ENCODE measurements at regions of chr11 and their contacts with region 1.

Region 1: DNA sequence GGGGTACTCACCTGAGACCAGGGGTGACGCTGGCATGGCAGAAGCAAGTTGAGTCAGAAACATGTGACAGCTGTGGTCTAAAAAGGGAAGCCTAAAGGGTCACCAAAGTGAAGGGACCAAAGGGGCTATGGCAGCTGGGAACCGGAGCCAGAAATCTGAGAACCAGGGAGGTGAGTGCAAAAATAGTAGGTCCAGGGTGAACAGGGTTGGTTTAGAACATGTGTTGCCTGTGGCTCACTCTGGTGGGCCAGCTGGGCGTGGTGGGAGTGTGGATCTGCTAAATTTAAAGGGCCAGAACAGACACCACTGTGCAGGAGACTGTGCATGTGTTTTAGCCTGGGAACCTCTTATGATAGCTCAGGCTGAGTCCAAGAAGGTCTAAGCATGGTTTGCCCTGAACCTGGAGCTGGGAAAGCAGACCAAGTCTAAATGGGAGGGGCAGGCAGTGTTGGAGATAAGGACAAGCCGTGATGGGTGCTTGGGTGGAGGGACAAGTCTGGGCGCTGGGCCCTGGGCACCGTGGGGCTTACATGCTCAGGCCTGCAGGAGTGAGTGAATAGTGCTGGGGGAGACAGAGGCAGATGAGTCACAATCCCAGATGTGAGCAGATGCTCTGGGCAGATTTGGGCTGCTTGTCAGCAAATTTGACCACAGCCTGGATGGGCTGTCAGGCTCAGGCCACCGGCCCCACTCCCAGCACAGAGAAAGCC is 41.4 kb upstream of the ZBED5 start:
- DNase-seq: no peak
- ATAC-seq: peak; percentile 73
- H3K4me3 ChIP-seq: peak overlapping the region; percentile 7 to 40; a peak in 3 of 4 replicates
- H3K27ac ChIP-seq: peak overlapping the region; percentile 93
- H3K4me1 ChIP-seq: peaks cover 34 to 45% of the 10 kb centered on the region in 2 experiments
- H3K27me3 ChIP-seq: no peaks in the 10 kb centered on the region
- CTCF ChIP-seq: no peak
- POLR2A ChIP-seq: peak; percentile 21
- RAD21 ChIP-seq: no peak

Region 2: DNA sequence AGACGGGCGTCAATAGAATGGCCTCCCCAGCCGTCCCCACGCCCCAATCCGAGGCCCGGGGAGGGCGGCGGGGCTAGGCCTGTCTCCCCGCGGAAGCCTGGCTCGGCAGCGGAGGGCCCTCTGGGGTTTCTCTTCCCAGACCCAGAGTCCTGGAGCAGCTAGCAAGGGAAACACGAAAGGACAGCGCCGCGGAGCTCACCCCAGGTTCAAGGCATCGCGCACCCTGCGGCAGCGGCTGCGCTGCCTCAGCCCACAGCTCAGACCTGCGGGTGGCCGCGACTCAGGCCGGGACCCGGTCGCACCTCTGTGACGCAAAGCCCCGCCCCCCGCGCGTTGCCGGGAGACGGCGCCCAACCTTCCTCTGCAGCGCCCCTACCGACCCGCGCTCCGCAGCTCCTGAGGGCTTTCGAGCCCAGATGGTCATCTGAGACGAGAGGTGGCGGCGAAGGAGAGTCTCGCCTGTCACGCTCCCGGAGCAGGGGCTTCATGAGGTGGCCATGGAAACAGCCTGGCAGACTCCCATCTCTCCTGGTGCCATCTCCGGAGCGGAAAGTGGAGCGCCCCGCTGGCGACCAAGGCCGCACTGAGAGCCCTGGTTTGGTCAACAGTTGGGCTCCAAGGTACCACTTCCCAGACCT is 358.2 kb before region 1 on chr11 and contains the start of gene RNF141:
- CTCF ChIA-PET with region 1: no interaction called
- POLR2A ChIA-PET with region 1: no interaction called
- RAD21 ChIA-PET with region 1: no interaction called
- intact Hi-C with region 1: no loop called
- DNase-seq: peak; percentile 84
- ATAC-seq: peak; percentile 89
- H3K4me3 ChIP-seq: peak within 1 kb of the TSS; percentile 76 to 83
- H3K27ac ChIP-seq: peak within 1 kb of the TSS; percentile 94
- H3K4me1 ChIP-seq: peaks cover 40 to 54% of the 10 kb centered on the region in 2 experiments
- H3K27me3 ChIP-seq: no peaks in the 10 kb centered on the region
- CTCF ChIP-seq: peak; percentile 57 to 83 (median 67); a peak in 5 of 6 replicates
- POLR2A ChIP-seq: peak; percentile 91
- RAD21 ChIP-seq: peak; percentile 53
- total RNA-seq, gene RNF141: 133 TPM

Region 3: DNA sequence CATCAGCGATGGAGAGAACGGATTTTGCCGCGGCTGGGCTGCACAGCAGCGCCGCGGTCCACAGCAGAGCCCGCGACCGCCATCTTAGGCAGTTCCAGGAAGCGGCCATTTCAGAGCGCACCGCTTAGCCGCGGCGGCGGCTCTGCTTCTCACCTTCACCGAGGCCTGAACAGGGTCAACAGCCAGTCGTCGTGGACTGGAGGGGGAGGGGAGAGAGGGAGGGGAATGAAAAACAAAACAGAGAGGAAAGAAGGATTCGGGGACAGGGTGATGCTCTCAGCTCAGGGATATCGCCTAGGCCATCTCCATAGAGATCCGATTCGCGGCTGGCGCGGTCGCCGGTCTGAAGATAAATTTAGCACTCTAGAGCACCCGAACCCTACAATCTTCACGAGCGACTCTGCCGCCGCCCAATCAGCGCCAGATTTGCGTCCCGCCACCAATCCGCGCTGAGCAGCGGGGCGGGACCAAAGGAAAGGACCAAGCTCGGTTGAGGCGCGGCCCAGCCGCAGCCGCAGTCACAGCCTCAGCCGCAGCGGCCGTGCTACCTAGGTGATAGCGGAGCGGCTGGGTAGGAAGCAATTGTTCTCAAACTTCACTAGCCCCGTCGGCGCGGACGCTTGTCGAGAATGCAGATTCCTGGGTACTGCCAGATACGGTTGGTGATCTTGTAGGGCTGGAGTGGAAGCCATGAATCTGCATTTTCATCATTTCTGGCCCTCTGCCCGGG is 41.4 kb before region 1 on chr11 and contains the start of gene ZBED5:
- CTCF ChIA-PET with region 1: no interaction called
- POLR2A ChIA-PET with region 1: interaction called, 9 read pairs
- RAD21 ChIA-PET with region 1: interaction called in 1 of 2 experiments, 6 read pairs
- intact Hi-C with region 1: loop called (anchors 1 kb)
- DNase-seq: peak; percentile 94
- ATAC-seq: peak; percentile 92
- H3K4me3 ChIP-seq: peak within 1 kb of the TSS; percentile 86 to 91
- H3K27ac ChIP-seq: peak within 1 kb of the TSS; percentile 91
- H3K4me1 ChIP-seq: peaks cover 0 to 21% of the 10 kb centered on the region in 2 experiments; a peak in 2 of 4 replicates
- H3K27me3 ChIP-seq: no peaks in the 10 kb centered on the region
- CTCF ChIP-seq: no peak
- POLR2A ChIP-seq: peak; percentile 84
- RAD21 ChIP-seq: peak; percentile 31; the same call in 1 of the 2 replicates
- total RNA-seq, gene ZBED5: 26.8 TPM

Region 4: GRCh38 chr11:11748706-11749365 is 849.6 kb after region 1 on chr11:
- CTCF ChIA-PET with region 1: no interaction called
- POLR2A ChIA-PET with region 1: no interaction called
- RAD21 ChIA-PET with region 1: no interaction called
- intact Hi-C with region 1: no loop called
- DNase-seq: no peak
- ATAC-seq: no peak
- H3K4me3 ChIP-seq: no peak overlapping the region
- H3K27ac ChIP-seq: no peak overlapping the region
- H3K4me1 ChIP-seq: peaks cover 0 to 14% of the 10 kb centered on the region in 2 experiments; a peak in 2 of 4 replicates
- H3K27me3 ChIP-seq: no peaks in the 10 kb centered on the region
- CTCF ChIP-seq: no peak
- POLR2A ChIP-seq: no peak
- RAD21 ChIP-seq: no peak